Right cardiac atrium (tissue), 5 donors: ENCODE measurements at regions of chr11 and their contacts with region 1.

Region 1: GRCh38 chr11:120682866-120683265 is 171.3 kb downstream of the GRIK4 start:
- DNase-seq: no peak
- ATAC-seq: no peak
- H3K4me3 ChIP-seq: no peak overlapping the region
- H3K27ac ChIP-seq: no peak overlapping the region
- H3K4me1 ChIP-seq: no peaks in the 10 kb centered on the region
- H3K27me3 ChIP-seq: no peaks in the 10 kb centered on the region

Region 2: DNA sequence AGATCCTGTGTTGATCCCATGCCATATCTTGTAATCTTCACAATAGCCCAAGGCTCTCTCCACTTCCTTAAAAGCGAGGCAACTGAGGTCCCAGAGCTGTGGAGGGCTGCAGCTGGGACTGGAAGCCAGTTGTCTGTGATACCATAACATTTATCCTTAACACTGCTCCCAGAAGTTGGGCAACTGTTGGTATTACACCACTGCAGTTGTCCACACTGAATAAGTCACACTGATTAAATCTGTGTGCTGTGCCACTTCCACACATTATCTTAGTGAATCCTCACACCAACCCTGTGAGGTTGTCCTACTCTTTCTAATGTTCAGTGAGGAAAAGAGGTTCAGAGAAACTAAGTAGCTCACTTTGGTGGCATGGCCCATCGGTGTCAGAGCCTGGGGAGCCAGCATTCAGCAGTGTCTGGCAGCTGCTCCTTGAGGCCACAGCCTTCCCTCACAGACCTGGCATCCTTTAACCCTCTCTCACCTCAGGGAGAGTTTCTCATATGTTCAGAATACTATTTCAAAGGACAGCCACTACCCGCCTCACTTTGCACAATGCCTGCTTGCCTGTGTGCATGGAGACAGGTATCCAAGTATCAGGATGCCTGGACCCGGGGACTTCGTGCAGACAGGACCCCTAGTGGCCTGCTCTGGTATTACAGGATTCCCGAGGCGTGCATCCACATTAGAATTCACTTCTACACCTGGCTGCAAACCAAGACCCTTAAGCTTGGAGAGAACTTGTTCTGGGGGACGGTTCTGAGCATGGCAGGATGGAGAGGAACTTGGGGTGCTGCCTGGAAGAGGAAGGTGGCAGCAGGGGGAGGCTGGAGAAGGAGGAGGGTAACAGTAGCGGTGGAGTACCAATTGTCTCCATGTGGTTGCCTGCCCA is 119.2 kb after region 1 on chr11:
- intact Hi-C with region 1: loop called in 1 of 4 experiments (anchors 10 kb)
- DNase-seq: peak; percentile 54 to 83 (median 66)
- ATAC-seq: peak; percentile 56 to 70
- H3K4me3 ChIP-seq: no peak overlapping the region
- H3K27ac ChIP-seq: no peak overlapping the region
- H3K4me1 ChIP-seq: no peaks in the 10 kb centered on the region
- H3K27me3 ChIP-seq: no peaks in the 10 kb centered on the region

Region 3: DNA sequence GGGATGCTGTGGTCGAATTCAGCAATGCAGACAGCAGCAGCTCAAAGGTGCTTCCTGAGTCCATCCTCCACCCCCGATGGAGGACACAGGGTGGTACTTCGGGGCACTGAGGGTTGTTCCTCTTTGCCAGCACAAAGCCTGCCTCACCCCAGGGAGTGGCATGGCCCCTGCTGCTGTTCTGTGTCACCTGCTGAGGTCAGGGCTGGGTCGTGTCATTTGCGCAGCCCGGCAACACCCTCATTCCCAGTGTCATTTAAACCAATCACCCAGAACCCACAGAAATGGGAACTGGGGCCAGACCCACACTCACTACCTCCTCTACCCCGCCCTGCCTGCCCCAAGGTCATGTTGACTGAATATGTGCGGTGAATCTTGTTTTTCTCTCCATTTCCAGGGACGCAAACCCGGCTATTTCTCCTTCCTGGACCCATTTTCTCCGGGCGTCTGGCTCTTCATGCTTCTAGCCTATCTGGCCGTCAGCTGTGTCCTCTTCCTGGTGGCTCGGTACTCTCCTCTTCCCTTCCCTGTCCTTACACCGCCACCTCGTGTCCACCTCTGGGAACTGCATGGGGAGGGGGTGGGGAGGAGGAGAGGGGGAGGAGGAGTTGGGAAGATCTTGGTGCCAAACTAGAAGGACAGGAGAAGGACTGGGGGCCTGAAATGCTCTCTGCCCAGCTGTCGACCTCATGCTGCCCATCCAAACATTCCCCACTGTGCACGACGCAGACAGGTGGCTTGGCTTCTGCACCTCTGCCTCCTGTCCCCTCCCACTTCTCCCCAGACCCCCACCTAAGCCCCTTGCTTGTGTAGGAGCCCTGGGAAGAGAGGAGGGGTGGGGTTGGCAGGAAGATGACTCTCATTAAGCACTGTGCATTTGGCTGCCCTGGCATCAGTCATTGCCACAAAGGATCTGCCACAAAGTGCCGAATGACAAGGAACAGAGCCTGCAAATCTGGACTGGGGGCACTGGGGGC is 269.9 kb after region 1 on chr11:
- intact Hi-C with region 1: loop called in 1 of 4 experiments (anchors 10 kb)
- DNase-seq: peak; percentile 74 to 93 (median 89)
- ATAC-seq: peak; percentile 90
- H3K4me3 ChIP-seq: no peak overlapping the region
- H3K27ac ChIP-seq: no peak overlapping the region
- H3K4me1 ChIP-seq: peaks cover 3% of the 10 kb centered on the region
- H3K27me3 ChIP-seq: no peaks in the 10 kb centered on the region